Activated CD4-positive, alpha-beta memory T cell treated with anti-CD3 and anti-CD28 coated beads, Interleukin-2, amount 10 ng/mL, durations not matched to agents 7 days and 5 days (primary cell): ENCODE measurements at regions of chr22 and their contacts with region 1.

Region 1: DNA sequence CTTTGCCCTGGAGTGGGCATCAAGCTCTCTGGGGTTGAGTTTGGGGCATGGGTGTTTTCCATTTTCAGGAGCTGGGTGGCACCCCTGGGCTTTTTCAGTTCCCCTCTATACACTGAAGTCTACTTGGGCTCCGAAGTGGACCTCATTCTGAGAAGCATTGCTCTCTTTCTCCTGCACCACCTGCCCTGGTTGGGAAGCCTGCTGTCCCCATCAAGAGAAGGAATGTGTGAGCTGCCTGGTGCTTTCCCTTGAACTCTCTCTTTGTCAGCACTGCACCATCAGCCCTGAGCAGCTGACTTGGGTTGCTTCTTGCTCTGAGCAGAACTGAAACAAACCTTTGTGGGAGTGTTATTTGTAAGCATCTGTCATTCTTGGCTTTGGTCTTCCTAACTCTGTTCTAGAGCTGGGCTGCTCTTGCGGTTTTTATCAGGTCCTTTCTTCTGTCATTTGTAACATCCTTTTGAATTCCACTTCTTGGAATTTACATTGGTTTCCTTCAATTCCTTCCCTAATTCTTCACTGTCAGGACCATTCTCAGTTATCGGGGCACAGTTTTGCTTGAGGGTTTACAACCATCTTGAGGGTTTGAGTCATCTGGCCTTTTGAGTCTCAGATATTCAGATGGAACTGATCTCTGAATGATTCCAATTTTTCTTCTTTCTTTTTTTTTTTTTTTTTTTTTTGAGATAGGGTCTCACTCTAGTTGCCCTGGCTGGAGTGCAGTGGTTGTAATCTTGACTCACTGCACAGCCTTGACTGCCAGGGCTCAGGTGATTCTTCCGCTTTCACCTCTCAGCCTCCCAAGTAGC is 20.5 kb downstream of the UBE2L3 start:
- DNase-seq: peak; percentile 54
- H3K4me3 Mint-ChIP-seq: no peak overlapping the region
- H3K27ac Mint-ChIP-seq: peak overlapping the region; percentile 67
- H3K4me1 Mint-ChIP-seq: peaks cover 46% of the 10 kb centered on the region
- H3K27me3 Mint-ChIP-seq: no peaks in the 10 kb centered on the region

Region 2: GRCh38 chr22:21567456-21568346 is 20.3 kb before region 1 on chr22 and contains the start of gene UBE2L3:
- CTCF ChIA-PET with region 1: no interaction called
- POLR2A ChIA-PET with region 1: interaction called, 12 read pairs
- DNase-seq: peak; percentile 88
- H3K4me3 Mint-ChIP-seq: peak within 1 kb of the TSS; percentile 92
- H3K27ac Mint-ChIP-seq: peak within 1 kb of the TSS; percentile 90
- H3K4me1 Mint-ChIP-seq: peaks cover 45% of the 10 kb centered on the region
- H3K27me3 Mint-ChIP-seq: peaks cover 2% of the 10 kb centered on the region
- total RNA-seq, gene UBE2L3: 54.3 to 57.4 TPM